ENCODE measurements at regions of chr4 and their contacts with region 1.

Region 1: GRCh38 chr4:57043347-57044251 is 64.9 kb downstream of the POLR2B start:
- DNase-seq: no peak
- H3K4me3 ChIP-seq: no peak overlapping the region
- H3K27ac ChIP-seq: peak overlapping the region in 44 of 59 donors; percentile 13 to 76 (median 56)
- H3K27me3 ChIP-seq: no peaks in the 10 kb centered on the region
- CTCF ChIP-seq: no peak

Region 2: DNA sequence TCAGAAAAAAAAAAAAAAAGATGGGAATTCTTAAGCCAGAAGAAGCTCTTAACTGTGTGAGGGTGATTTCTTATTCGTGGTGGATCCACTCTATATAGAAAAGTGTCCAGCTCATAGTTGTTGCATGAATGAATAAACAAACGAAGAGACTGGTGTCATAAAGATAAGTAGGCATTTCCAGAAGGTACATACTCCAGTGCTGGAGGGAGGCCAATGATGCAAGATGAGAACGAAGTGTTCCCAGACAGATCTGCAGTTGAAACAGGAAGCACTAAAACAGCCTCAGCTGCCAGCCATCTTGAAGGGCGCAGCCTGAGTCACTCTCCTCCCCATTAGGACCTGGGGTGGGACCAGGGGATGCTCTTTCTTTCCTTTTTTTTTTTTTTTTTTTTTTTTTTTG is 315.1 kb before region 1 on chr4:
- intact Hi-C with region 1: no loop called
- DNase-seq: peak in 2 of 10 donors; percentile 61 to 65
- H3K4me3 ChIP-seq: no peak overlapping the region
- H3K27ac ChIP-seq: no peak overlapping the region
- H3K27me3 ChIP-seq: no peaks in the 10 kb centered on the region
- CTCF ChIP-seq: no peak

Region 3: GRCh38 chr4:57110640-57111511 is 67.3 kb after region 1 on chr4:
- intact Hi-C with region 1: loop called in 1 of 2 experiments (anchors 5 kb)
- DNase-seq: peak in 4 of 10 donors; percentile 44 to 52 (median 45)
- H3K4me3 ChIP-seq: peak overlapping the region; percentile 37 to 78 (median 63)
- H3K27ac ChIP-seq: peak overlapping the region in 56 of 59 donors; percentile 20 to 93 (median 80)
- H3K27me3 ChIP-seq: peaks cover 0 to 22% (median 4%) of the 10 kb centered on the region in 45 donors
- CTCF ChIP-seq: peak in 1 of 56 donors; percentile 12

Measured in dorsolateral prefrontal cortex (tissue), 120 donors.